ENCODE measurements at regions of chr16 and their contacts with region 1.

Region 1: GRCh38 chr16:20300312-20301097 is 26.8 kb downstream of the GP2 start:
- DNase-seq: peak in 1 of 2 donors; percentile 17
- ATAC-seq: peak in 5 of 8 donors; percentile 26 to 63 (median 39)
- H3K4me3 ChIP-seq: no peak overlapping the region
- H3K27ac ChIP-seq: no peak overlapping the region
- H3K4me1 ChIP-seq: no peaks in the 10 kb centered on the region
- H3K27me3 ChIP-seq: peaks cover 0 to 61% (median 26%) of the 10 kb centered on the region in 7 donors
- CTCF ChIP-seq: peak; percentile 19 to 74 (median 59)

Region 2: DNA sequence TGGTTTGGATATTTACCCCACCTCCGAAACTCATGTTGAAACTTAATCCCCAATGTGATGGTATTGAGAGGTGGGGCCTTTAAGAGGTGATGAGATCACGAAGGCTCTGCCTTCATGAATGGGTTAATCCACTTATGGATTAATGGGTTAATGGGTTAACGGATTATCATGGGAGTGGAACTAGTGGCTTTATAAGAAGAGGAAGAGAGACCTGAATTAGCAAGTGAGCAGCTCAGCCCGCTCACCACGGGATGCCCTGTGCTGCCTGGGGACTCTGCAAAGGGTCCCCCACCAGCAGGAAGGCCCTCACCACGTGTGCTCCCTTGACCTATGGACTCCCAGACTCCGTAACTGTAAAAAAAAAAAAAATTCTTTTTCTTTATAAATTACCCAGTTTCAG is 399.3 kb before region 1 on chr16:
- intact Hi-C with region 1: loop called in 6 of 10 experiments (anchors 5 kb)
- DNase-seq: no peak
- ATAC-seq: no peak
- H3K4me3 ChIP-seq: no peak overlapping the region
- H3K27ac ChIP-seq: no peak overlapping the region
- H3K4me1 ChIP-seq: no peaks in the 10 kb centered on the region
- H3K27me3 ChIP-seq: peaks cover 0 to 7% (median 0%) of the 10 kb centered on the region in 7 donors
- CTCF ChIP-seq: no peak

Region 3: GRCh38 chr16:19907161-19907992 is 393.1 kb before region 1 on chr16:
- intact Hi-C with region 1: loop called in 8 of 10 experiments (anchors 5 to 10 kb)
- DNase-seq: peak; percentile 47 to 62
- ATAC-seq: peak; percentile 83 to 91 (median 89)
- H3K4me3 ChIP-seq: peak overlapping the region in 1 of 10 donors; percentile 15
- H3K27ac ChIP-seq: no peak overlapping the region
- H3K4me1 ChIP-seq: peaks cover 0 to 7% (median 5%) of the 10 kb centered on the region in 9 donors
- H3K27me3 ChIP-seq: peaks cover 0 to 36% (median 17%) of the 10 kb centered on the region in 7 donors
- CTCF ChIP-seq: peak; percentile 88 to 98 (median 95)

Region 4: DNA sequence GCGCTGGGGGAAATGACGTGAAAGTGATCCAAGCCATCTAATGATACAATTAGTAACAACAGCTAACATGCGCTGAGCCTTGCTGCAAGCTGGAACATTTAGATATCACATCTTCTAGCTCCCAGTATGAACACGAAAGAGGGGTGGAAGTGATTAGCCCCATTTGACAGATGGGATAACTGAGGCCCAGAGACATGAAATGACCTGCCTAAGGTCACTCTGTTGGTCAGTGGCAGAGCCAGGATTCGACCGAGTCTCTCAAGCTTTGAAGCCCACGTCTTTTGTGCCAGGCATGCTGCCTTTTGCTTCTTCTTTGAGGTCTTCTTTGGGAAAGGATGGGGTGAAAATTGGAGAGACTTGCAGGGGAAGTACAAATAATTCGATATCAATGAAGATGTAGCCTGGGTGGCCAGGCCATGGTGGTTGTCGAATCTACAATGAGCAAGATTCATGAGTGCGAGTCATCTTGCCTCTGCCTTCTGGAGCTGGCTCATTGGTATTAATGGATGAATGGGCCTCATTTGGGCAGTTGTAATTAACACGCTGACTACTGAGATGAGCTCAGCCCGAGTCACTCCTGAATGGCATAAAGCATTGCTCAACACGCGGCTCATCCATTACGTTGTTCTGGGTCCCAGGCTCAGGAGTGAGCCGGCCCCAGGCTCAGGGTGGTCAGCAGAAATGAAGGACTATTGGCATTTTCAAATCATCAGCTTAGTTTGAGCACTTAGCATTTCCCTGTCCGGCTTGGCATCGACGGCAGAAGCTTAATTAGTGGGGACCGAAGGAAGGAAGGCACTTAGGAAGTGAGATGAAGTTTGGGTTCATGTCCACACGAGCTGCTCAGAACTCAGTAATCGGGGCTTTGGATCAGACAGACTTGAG is 387.8 kb before region 1 on chr16:
- intact Hi-C with region 1: loop called in 6 of 10 experiments (anchors 5 to 10 kb)
- DNase-seq: no peak
- ATAC-seq: peak in 1 of 8 donors; percentile 37
- H3K4me3 ChIP-seq: no peak overlapping the region
- H3K27ac ChIP-seq: no peak overlapping the region
- H3K4me1 ChIP-seq: peaks cover 0 to 2% (median under 1%) of the 10 kb centered on the region in 9 donors
- H3K27me3 ChIP-seq: peaks cover 0 to 44% (median 13%) of the 10 kb centered on the region in 7 donors
- CTCF ChIP-seq: no peak

Region 5: DNA sequence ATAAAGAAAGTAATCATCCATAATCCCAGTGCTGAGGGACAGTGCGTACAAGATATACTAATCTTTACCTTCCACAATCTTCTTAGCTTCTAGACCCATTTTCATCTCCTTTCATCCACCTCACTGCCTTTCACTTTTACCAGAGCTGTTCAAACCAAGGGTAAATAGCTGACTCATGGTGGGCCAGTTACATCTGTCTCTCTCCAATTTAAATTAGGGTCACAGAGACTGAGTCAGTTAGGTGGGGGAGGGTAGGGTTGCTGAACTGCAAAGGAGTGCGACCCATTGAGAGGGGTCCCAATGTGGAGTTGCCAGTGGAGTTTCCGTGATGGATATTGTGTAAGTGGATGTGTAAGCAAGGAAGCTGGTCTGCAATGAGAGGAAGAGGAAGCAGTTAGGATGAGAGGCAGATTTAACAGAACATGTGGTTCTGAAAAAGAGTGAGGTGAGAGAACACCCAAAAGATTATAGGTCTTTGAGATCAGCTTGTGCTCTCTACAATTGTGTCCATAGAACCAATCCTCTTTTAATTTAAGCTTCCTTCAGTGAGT is 56.7 kb before region 1 on chr16:
- intact Hi-C with region 1: no loop called
- DNase-seq: no peak
- ATAC-seq: no peak
- H3K4me3 ChIP-seq: no peak overlapping the region
- H3K27ac ChIP-seq: no peak overlapping the region
- H3K4me1 ChIP-seq: no peaks in the 10 kb centered on the region
- H3K27me3 ChIP-seq: peaks cover 0 to 12% (median 7%) of the 10 kb centered on the region in 7 donors
- CTCF ChIP-seq: no peak